Activated naive CD4-positive, alpha-beta T cell treated with anti-CD3 and anti-CD28 coated beads for 36 hours (primary cell): ENCODE measurements at regions of chr18 and their contacts with region 1.

Region 1: GRCh38 chr18:69958422-69958821 is 10.7 kb upstream of the CD226 start:
- DNase-seq: peak; percentile 66
- H3K4me3 Mint-ChIP-seq: peak overlapping the region; percentile 27
- H3K27ac Mint-ChIP-seq: no peak overlapping the region
- H3K4me1 Mint-ChIP-seq: peaks cover 24% of the 10 kb centered on the region
- H3K27me3 Mint-ChIP-seq: no peaks in the 10 kb centered on the region

Region 2: GRCh38 chr18:69636529-69637301 is 321.7 kb before region 1 on chr18:
- CTCF ChIA-PET with region 1: no interaction called
- intact Hi-C with region 1: loop called (anchors 1 kb)
- DNase-seq: peak; percentile 34
- H3K4me3 Mint-ChIP-seq: no peak overlapping the region
- H3K27ac Mint-ChIP-seq: no peak overlapping the region
- H3K4me1 Mint-ChIP-seq: no peaks in the 10 kb centered on the region
- H3K27me3 Mint-ChIP-seq: no peaks in the 10 kb centered on the region

Region 3: GRCh38 chr18:69889009-69889408 is 69.4 kb before region 1 on chr18:
- CTCF ChIA-PET with region 1: no interaction called
- intact Hi-C with region 1: loop called (anchors 1 kb)
- DNase-seq: peak; percentile 38
- H3K4me3 Mint-ChIP-seq: no peak overlapping the region
- H3K27ac Mint-ChIP-seq: peak overlapping the region; percentile 12
- H3K4me1 Mint-ChIP-seq: peaks cover 69% of the 10 kb centered on the region
- H3K27me3 Mint-ChIP-seq: no peaks in the 10 kb centered on the region

Region 4: GRCh38 chr18:69978732-69979715 is 20.6 kb after region 1 on chr18:
- CTCF ChIA-PET with region 1: interaction called, 9 read pairs
- intact Hi-C with region 1: loop called (anchors 1 kb)
- DNase-seq: peak; percentile 27
- H3K4me3 Mint-ChIP-seq: no peak overlapping the region
- H3K27ac Mint-ChIP-seq: peak overlapping the region; percentile 37
- H3K4me1 Mint-ChIP-seq: peaks cover 44% of the 10 kb centered on the region
- H3K27me3 Mint-ChIP-seq: no peaks in the 10 kb centered on the region